Common myeloid progenitor, CD34-positive (primary cell): ENCODE measurements at regions of chr17 and their contacts with region 1.

Region 1: DNA sequence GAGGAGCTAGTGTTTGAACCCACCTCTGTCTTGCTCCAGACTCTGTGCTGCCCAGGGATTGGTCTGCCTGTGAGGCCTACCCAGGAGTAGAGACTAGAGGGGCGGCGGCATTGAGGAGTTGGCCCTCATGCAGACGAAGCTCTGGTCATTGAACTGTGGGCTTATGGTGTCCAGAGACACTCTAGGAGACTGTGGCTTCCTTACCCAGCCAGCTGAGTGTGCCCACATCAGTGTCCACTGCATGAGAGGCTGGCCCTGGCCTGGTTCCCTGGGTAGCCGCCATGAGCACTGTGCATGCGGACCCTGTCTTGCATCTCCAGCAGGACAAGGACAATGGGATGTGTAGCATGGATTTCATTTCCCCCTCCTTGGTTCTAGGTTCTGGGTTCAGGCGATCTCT is 14.0 kb downstream of the SGSM2 start:
- DNase-seq: no peak
- H3K4me3 ChIP-seq: no peak overlapping the region
- H3K27ac ChIP-seq: no peak overlapping the region
- H3K4me1 ChIP-seq: no peaks in the 10 kb centered on the region
- H3K27me3 ChIP-seq: no peaks in the 10 kb centered on the region

Region 2: GRCh38 chr17:2336215-2336851 is 14.9 kb before region 1 on chr17 and contains the start of gene TSR1:
- CTCF ChIA-PET with region 1: interaction called, 20 read pairs
- POLR2A ChIA-PET with region 1: interaction called, 3 read pairs
- DNase-seq: peak; percentile 81 to 88 (median 86)
- H3K4me3 ChIP-seq: peak within 1 kb of the TSS; percentile 89 to 99 (median 96)
- H3K27ac ChIP-seq: peak within 1 kb of the TSS; percentile 35 to 83
- H3K4me1 ChIP-seq: peaks cover 9 to 30% (median 28%) of the 10 kb centered on the region in 4 experiments
- H3K27me3 ChIP-seq: no peaks in the 10 kb centered on the region

Region 3: DNA sequence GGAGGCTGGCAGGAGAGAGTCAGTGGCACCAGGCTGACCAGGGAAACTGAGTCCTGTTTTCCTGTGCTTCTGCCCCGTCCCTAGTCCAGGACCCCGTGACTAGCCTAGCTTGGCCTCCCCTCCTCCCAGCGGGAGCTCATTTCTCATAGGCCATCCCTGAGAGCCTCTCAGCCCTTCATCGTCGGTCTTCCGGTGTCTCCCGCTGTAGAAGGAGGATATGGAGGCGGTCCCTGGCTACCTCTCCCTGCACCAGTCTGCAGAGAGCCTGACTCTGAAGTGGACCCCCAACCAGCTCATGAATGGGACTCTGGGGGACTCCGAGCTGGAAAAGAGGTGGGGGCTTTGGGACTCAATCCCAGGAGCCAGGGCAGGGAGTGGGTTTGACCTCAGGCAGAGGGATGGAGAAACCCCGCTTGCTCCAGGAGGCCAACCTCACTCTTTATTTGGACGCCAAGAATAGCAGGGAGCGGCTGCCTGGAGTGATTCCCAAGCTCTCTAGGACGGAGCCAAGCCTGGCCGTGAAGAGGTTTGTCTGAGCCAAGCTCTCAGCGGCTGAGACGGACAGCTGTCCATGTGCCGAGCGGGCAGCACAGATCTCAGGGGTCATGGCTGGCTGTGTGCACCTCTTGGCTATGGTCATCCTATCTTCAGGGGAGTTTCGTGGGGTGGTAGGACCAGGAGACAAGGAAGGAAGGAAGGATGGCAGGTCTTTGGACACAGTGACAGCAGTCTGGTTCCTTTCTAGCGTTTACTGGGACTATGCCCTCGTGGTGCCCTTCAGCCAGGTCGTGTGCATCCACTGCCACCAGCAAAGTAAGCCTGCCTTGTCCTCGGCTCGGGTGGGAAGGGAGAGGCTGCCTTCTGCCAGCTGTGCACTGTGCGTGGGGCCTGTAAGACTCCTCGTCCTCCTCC is 12.8 kb after region 1 on chr17:
- CTCF ChIA-PET with region 1: interaction called, 21 read pairs
- POLR2A ChIA-PET with region 1: no interaction called
- DNase-seq: no peak
- H3K4me3 ChIP-seq: no peak overlapping the region
- H3K27ac ChIP-seq: no peak overlapping the region
- H3K4me1 ChIP-seq: peaks cover 0 to 6% (median 2%) of the 10 kb centered on the region in 4 experiments
- H3K27me3 ChIP-seq: no peaks in the 10 kb centered on the region

Region 4: DNA sequence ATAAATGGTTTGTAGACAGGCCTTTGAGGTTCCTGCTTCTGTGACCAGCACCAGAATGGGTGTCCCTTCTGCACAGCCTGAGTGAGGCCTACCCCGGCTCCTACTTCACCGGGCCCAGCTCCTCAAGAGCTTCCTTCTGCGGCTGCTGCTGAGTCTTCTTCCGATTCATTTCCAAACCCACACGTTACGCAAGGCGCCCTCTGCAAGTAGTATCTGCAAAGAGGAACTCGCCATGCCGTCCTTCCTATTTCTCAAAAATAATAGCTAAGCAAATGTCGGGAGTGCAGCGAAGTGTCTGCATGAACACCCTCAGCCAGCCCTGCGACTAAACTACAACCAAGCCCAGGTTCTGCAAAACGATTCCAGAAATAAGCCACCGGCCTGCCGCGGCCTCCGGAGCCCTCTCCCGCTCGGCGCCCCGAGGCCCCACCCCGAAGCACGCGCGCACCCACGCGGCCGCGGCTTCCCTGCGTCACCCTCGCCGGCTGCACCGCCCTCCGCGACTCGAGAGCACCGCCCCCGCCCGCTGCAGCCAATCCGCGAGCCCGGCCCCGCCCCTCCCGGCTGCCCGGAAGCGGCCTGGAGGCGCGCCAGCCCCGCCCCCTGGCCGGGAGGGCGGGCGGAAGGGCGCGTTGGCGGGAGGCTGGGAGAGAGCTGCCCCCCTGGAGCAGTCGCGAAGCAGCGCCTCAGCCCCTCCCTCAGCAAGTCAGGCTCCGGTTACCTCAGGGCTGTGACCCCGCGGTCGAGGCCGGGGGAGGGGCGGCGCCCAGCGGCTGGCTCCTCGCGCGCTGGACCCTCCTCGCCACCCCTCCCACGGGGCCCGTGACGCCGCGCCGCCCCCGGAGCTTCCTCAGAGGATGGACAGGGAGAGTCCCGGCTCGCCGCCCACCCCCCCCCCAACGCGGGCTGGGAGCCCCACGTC is 41.2 kb after region 1 on chr17:
- CTCF ChIA-PET with region 1: no interaction called
- POLR2A ChIA-PET with region 1: no interaction called
- DNase-seq: peak; percentile 93 to 97 (median 96)
- H3K4me3 ChIP-seq: peak overlapping the region; percentile 59 to 86 (median 68)
- H3K27ac ChIP-seq: peak overlapping the region; percentile 79 to 91
- H3K4me1 ChIP-seq: peaks cover 13 to 65% (median 61%) of the 10 kb centered on the region in 4 experiments
- H3K27me3 ChIP-seq: no peaks in the 10 kb centered on the region